ENCODE measurements at regions of chr18 and their contacts with region 1.

Region 1: GRCh38 chr18:58213440-58213839 is 169.4 kb downstream of the NEDD4L start:
- DNase-seq: no peak
- ATAC-seq: peak; percentile 8
- H3K4me3 ChIP-seq: no peak overlapping the region
- H3K27ac ChIP-seq: no peak overlapping the region
- H3K4me1 ChIP-seq: peaks cover 12% of the 10 kb centered on the region; the same call in 1 of the 2 replicates
- H3K27me3 ChIP-seq: no peaks in the 10 kb centered on the region
- CTCF ChIP-seq: no peak
- EP300 ChIP-seq: no peak
- POLR2A ChIP-seq: no peak
- RAD21 ChIP-seq: no peak

Region 2: GRCh38 chr18:58202406-58202730 is 11.1 kb before region 1 on chr18:
- CTCF ChIA-PET with region 1: interaction called, 3 read pairs
- POLR2A ChIA-PET with region 1: interaction called, 14 read pairs
- RAD21 ChIA-PET with region 1: interaction called, 8 read pairs
- SMC1A ChIA-PET with region 1: interaction called, 15 read pairs
- in situ Hi-C with region 1: no loop called
- intact Hi-C with region 1: no loop called
- DNase-seq: no peak
- ATAC-seq: no peak
- H3K4me3 ChIP-seq: no peak overlapping the region
- H3K27ac ChIP-seq: no peak overlapping the region
- H3K4me1 ChIP-seq: no peaks in the 10 kb centered on the region
- H3K27me3 ChIP-seq: no peaks in the 10 kb centered on the region
- CTCF ChIP-seq: no peak
- EP300 ChIP-seq: no peak
- POLR2A ChIP-seq: no peak
- RAD21 ChIP-seq: no peak

Region 3: DNA sequence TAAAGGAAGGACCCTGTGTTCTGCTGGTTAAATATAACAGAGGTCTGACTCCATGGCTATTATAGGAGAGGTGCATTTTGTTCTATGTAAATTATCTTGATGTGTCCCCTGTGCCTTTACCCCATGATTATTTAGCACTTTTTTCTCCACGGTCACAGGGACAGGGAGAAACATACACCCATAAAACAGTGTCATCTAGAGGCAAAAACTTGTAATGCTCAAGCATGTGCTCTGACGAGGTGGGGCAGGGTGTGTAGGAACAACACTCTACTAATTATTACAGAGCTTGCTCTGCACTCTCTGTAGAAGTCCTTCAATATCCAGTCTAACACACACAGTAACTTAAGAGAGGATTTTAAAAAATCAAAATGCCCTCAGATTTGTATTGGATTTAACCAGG is 18.5 kb after region 1 on chr18:
- CTCF ChIA-PET with region 1: interaction called, 3 read pairs
- POLR2A ChIA-PET with region 1: interaction called, 46 read pairs
- RAD21 ChIA-PET with region 1: interaction called, 12 read pairs
- SMC1A ChIA-PET with region 1: interaction called, 66 read pairs
- in situ Hi-C with region 1: no loop called
- intact Hi-C with region 1: no loop called
- DNase-seq: no peak
- ATAC-seq: peak; percentile 84
- H3K4me3 ChIP-seq: no peak overlapping the region
- H3K27ac ChIP-seq: no peak overlapping the region
- H3K4me1 ChIP-seq: peaks cover 4% of the 10 kb centered on the region
- H3K27me3 ChIP-seq: no peaks in the 10 kb centered on the region
- CTCF ChIP-seq: peak; percentile 26 to 54 (median 38); a peak in 4 of 6 replicates
- EP300 ChIP-seq: no peak
- POLR2A ChIP-seq: no peak
- RAD21 ChIP-seq: peak; percentile 68